Esophagus squamous epithelium (tissue), 5 donors: ENCODE measurements at regions of chr3 and their contacts with region 1.

Region 1: GRCh38 chr3:128794770-128795649 is 69.0 kb downstream of the RAB7A start:
- DNase-seq: no peak
- H3K4me3 ChIP-seq: no peak overlapping the region
- H3K27ac ChIP-seq: peak overlapping the region; percentile 9 to 73 (median 54)
- H3K4me1 ChIP-seq: peaks cover 14 to 48% (median 22%) of the 10 kb centered on the region in 3 donors
- H3K27me3 ChIP-seq: no peaks in the 10 kb centered on the region
- CTCF ChIP-seq: peak; percentile 70 to 90 (median 82)
- POLR2A ChIP-seq: no peak

Region 2: DNA sequence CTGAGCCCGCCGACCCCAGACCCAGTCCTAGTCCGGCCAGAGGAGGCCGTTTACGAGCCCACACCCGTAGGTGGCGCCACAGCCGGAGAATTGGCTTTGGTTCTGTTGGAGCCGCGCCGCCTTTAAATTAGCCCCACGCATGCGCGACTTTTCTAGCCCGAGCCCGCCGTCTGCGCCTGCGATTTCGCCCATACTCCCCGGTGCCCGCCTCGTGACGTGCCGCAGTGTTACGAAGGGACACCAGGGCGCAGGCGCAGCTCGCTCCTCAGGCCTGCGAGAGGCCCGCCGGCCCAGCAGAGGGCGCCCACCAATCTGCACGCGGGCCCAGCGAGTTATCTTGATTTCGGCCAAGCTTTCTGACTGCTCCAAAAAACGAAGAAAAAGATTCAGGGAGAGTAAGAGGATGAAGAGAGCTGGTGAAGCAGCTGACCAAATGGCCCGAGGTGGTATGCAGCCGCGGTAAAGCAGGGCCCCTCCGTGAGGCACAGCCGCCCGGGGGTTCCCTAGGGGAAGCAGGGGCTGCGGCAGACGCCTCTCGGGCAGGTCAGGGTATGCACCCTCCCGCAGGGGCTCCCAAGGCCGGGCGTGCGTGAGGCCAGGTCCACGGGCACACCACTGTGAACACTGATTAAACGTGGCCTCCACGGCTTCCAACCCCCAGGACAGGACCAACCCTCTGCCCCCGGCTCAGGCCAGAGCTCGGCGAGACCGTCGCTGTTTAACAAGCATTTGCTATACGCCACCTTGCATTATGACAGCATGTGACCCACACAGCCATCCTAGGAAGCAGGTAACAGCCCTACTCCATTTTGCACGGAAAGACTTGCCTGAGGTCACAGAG is 177.2 kb before region 1 on chr3:
- intact Hi-C with region 1: loop called (anchors 10 kb)
- DNase-seq: peak; percentile 81
- H3K4me3 ChIP-seq: peak overlapping the region; percentile 67 to 93 (median 84)
- H3K27ac ChIP-seq: peak overlapping the region; percentile 87 to 92 (median 90)
- H3K4me1 ChIP-seq: peaks cover 12 to 27% (median 16%) of the 10 kb centered on the region in 3 donors
- H3K27me3 ChIP-seq: no peaks in the 10 kb centered on the region
- CTCF ChIP-seq: peak; percentile 92 to 100 (median 97)
- POLR2A ChIP-seq: no peak

Region 3: GRCh38 chr3:128680602-128681368 is 114.2 kb before region 1 on chr3:
- intact Hi-C with region 1: loop called (anchors 5 kb)
- DNase-seq: peak; percentile 88
- H3K4me3 ChIP-seq: peak overlapping the region; percentile 59 to 79 (median 70)
- H3K27ac ChIP-seq: peak overlapping the region; percentile 92 to 98 (median 96)
- H3K4me1 ChIP-seq: peaks cover 0 to 12% (median 7%) of the 10 kb centered on the region in 3 donors
- H3K27me3 ChIP-seq: no peaks in the 10 kb centered on the region
- CTCF ChIP-seq: peak; percentile 88 to 100 (median 99)
- POLR2A ChIP-seq: peak in 2 of 4 donors; percentile 66 to 84

Region 4: DNA sequence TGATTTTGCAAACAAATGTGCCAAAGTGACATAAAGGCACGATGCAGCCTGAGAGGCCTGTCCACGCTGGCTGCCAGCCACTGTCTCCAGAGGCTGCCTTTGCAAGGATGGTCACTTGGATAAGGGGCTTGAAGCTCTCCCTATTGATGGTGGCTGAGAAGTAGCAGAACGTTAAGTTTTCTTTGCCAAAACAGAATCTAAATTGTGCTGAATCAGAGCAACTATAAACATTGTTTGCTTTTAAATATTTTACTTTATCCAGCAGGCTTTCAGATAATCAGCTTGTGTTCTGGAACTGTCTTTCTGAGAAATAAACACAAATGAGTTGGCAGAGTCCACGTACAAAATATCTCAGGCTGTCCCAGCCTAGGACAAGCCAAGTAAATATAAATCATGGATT is 412.5 kb after region 1 on chr3:
- intact Hi-C with region 1: no loop called
- DNase-seq: no peak
- H3K4me3 ChIP-seq: no peak overlapping the region
- H3K27ac ChIP-seq: peak overlapping the region in 2 of 4 donors; percentile 21 to 67
- H3K4me1 ChIP-seq: peaks cover 10 to 22% (median 16%) of the 10 kb centered on the region in 3 donors
- H3K27me3 ChIP-seq: no peaks in the 10 kb centered on the region
- CTCF ChIP-seq: no peak
- POLR2A ChIP-seq: no peak